ENCODE measurements at regions of chr19 and their contacts with region 1.

Region 1: GRCh38 chr19:42244347-42245220 is 2.2 kb upstream of the GSK3A start:
- DNase-seq: peak; percentile 96
- ATAC-seq: peak; percentile 40
- H3K4me3 ChIP-seq: peak overlapping the region; percentile 67 to 97 (median 87)
- H3K4me3 Mint-ChIP-seq: peak overlapping the region; percentile 100
- H3K27ac ChIP-seq: peak overlapping the region; percentile 64 to 71
- H3K27ac Mint-ChIP-seq: peak overlapping the region; percentile 99
- H3K4me1 ChIP-seq: peaks cover 30 to 40% of the 10 kb centered on the region in 2 donors
- H3K4me1 Mint-ChIP-seq: peaks cover 53% of the 10 kb centered on the region
- H3K27me3 ChIP-seq: no peaks in the 10 kb centered on the region
- H3K27me3 Mint-ChIP-seq: no peaks in the 10 kb centered on the region
- CTCF ChIP-seq: peak; percentile 70

Region 2: DNA sequence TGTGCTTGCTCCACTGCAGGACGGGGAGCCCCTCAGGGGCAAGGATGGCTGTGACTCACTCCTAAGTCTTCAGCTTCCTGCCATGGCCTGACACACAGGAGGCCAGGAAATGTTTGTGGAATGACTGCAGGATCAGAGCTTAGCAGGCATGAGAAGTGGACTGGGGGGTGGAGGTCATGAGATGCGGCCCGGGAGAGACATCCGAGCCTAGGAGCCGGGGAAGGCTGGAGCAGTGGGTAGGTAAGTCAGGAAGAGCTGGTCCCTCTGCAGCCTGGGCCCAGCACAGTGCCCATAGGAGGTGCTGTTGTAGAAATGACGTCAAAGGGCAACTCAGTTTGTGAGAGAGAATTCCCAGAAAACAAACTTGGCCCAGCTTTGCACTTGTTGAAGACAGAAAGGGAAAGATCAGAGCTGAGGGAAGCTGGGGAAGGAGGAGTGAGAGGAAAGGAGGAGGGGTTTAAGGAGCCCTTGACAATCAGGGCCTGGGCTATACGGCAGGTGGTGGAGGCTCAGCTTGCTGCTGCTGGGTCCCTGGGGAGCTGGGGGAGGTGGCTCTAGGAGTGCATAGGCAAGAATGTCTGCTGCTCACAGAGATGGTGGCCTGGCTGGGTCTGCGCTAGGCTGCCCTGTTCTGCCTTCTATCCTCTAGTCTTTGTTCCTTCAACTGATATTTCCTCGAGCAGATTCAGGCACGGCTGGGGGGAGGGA is 130.8 kb before region 1 on chr19:
- CTCF ChIA-PET with region 1: interaction called, 8 read pairs
- POLR2A ChIA-PET with region 1: interaction called, 10 read pairs
- intact Hi-C with region 1: loop called (anchors 1 kb)
- DNase-seq: peak; percentile 84
- ATAC-seq: peak; percentile 80
- H3K4me3 ChIP-seq: peak overlapping the region in 4 of 5 experiments; percentile 16 to 49 (median 38)
- H3K4me3 Mint-ChIP-seq: peak overlapping the region; percentile 87
- H3K27ac ChIP-seq: peak overlapping the region; percentile 71 to 79
- H3K27ac Mint-ChIP-seq: peak overlapping the region; percentile 98
- H3K4me1 ChIP-seq: peaks cover 81 to 98% of the 10 kb centered on the region in 2 donors
- H3K4me1 Mint-ChIP-seq: peaks cover 91% of the 10 kb centered on the region
- H3K27me3 ChIP-seq: no peaks in the 10 kb centered on the region
- H3K27me3 Mint-ChIP-seq: no peaks in the 10 kb centered on the region
- CTCF ChIP-seq: no peak

Region 3: DNA sequence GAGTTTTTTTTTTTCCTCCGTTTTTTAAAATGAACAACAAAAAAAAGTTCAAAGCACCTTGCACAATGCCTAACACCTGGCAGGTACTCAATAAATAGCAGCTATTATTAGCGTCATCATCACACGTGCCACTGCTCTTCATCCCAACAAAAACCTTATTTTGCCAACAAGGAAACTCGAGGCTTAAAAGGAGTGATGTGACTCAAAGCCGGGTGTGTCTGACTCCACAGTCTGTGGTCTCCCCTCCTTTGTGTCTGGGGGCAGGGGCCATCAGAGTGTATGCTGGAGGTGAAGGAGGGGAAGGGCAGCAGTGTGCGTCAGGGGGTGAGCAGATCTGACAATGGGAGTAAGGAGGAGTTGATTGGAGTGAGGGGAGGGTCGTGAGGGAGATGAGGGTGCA is 78.3 kb before region 1 on chr19:
- CTCF ChIA-PET with region 1: no interaction called
- POLR2A ChIA-PET with region 1: no interaction called
- intact Hi-C with region 1: no loop called
- DNase-seq: no peak
- ATAC-seq: no peak
- H3K4me3 ChIP-seq: no peak overlapping the region
- H3K4me3 Mint-ChIP-seq: no peak overlapping the region
- H3K27ac ChIP-seq: no peak overlapping the region
- H3K27ac Mint-ChIP-seq: no peak overlapping the region
- H3K4me1 ChIP-seq: no peaks in the 10 kb centered on the region
- H3K4me1 Mint-ChIP-seq: peaks cover 2% of the 10 kb centered on the region
- H3K27me3 ChIP-seq: peaks cover 0 to 8% (median 0%) of the 10 kb centered on the region in 4 experiments
- H3K27me3 Mint-ChIP-seq: peaks cover 3% of the 10 kb centered on the region
- CTCF ChIP-seq: no peak

Region 4: DNA sequence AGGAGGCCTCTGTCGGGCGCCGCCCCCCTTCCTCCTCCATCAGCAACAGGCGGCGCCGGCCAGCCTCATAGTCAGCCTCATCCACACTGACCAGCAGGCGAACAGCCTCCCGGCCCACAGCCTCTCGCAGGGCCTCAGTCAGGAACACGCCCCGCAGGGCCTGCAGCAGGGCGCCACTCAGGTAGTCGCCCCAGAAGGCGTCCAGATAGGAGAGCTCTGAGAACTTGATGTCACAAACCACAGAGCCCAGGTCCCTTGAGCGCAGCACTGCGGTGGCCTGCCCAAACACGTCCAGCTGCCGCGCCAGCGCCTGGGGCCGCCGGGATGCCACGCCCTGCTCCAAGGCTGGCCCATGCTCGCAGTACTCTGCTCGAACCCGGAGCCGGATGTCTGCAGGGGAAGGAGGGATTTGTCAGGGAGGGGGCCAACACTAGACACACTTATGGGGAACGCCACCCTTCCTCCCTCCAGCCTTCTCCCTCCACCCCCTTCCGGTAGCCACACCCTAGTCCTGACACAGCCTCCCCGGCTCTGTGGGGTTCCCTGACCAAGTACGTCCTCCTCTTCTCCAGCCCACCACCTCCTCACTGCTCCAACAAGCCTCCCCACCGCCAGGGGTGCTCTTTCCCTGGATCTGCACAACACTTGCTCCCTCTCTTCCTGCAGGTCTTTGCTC is 45.0 kb before region 1 on chr19:
- CTCF ChIA-PET with region 1: interaction called, 4 read pairs
- POLR2A ChIA-PET with region 1: interaction called, 5 read pairs
- intact Hi-C with region 1: loop called (anchors 1 kb)
- DNase-seq: peak; percentile 70
- ATAC-seq: peak; percentile 37
- H3K4me3 ChIP-seq: peak overlapping the region; percentile 27 to 54 (median 44)
- H3K4me3 Mint-ChIP-seq: peak overlapping the region; percentile 77
- H3K27ac ChIP-seq: peak overlapping the region; percentile 91 to 94
- H3K27ac Mint-ChIP-seq: peak overlapping the region; percentile 92
- H3K4me1 ChIP-seq: peaks cover 70 to 84% of the 10 kb centered on the region in 2 donors
- H3K4me1 Mint-ChIP-seq: peaks cover 82% of the 10 kb centered on the region
- H3K27me3 ChIP-seq: no peaks in the 10 kb centered on the region
- H3K27me3 Mint-ChIP-seq: no peaks in the 10 kb centered on the region
- CTCF ChIP-seq: peak; percentile 32

Region 5: DNA sequence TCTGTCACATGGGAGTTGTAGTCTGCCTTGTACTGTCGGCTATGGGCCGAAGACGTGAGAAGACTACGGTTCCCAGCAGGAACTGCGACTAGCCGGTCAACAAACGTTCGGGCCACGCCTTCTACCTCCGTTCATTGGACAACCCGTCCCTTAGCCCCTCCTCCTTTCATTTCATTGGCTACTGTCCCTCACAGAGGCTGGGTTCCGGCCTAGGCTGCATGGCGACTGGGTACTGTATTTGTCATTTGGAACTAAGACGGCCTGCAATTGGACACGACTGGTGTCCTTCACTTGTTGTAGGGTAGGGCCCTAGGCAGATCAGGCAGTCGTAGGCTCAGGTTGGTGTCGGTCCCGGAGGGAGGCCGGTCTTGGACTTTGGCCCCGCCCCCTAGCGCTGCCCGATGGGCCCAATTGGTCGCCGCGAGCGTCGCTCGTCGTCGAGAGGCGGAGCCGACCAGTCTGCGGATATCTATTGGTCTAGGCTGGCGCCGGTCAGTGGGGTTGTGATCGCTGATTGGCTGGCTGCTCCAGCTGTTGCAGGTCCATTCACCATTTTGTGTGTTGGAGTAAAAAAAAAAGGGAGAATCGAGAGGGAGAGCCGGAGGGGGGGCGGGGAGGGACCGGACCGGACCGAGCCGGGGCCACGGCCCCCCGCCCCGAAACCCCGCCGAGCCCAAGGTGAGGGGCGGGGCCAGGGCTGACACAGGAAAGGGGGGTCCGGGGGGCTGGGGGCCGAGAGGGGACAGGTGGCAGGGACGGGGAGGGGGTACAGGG is 24.3 kb after region 1 on chr19 and contains the start of gene CIC:
- CTCF ChIA-PET with region 1: interaction called, 5 read pairs
- POLR2A ChIA-PET with region 1: interaction called, 9 read pairs
- intact Hi-C with region 1: loop called (anchors 1 kb)
- DNase-seq: peak; percentile 100
- ATAC-seq: peak; percentile 76
- H3K4me3 ChIP-seq: peak within 1 kb of the TSS; percentile 74 to 95 (median 90)
- H3K4me3 Mint-ChIP-seq: peak within 1 kb of the TSS; percentile 88
- H3K27ac ChIP-seq: peak within 1 kb of the TSS; percentile 98 to 100
- H3K27ac Mint-ChIP-seq: peak within 1 kb of the TSS; percentile 96
- H3K4me1 ChIP-seq: peaks cover 26 to 32% of the 10 kb centered on the region in 2 donors
- H3K4me1 Mint-ChIP-seq: peaks cover 24% of the 10 kb centered on the region
- H3K27me3 ChIP-seq: no peaks in the 10 kb centered on the region
- H3K27me3 Mint-ChIP-seq: no peaks in the 10 kb centered on the region
- CTCF ChIP-seq: no peak
- total RNA-seq, gene CIC: 119 and 123 TPM in 2 replicates

Region 6: GRCh38 chr19:42301656-42302203 is 57.1 kb after region 1 on chr19 and contains the start of gene PRR19:
- CTCF ChIA-PET with region 1: interaction called, 8 read pairs
- POLR2A ChIA-PET with region 1: interaction called, 5 read pairs
- intact Hi-C with region 1: loop called (anchors 1 kb)
- DNase-seq: no peak
- ATAC-seq: peak; percentile 3
- H3K4me3 ChIP-seq: peak within 1 kb of the TSS; percentile 42 to 80 (median 66)
- H3K4me3 Mint-ChIP-seq: peak within 1 kb of the TSS; percentile 91
- H3K27ac ChIP-seq: peak within 1 kb of the TSS in 1 of 2 donors; percentile 3
- H3K27ac Mint-ChIP-seq: peak within 1 kb of the TSS; percentile 78
- H3K4me1 ChIP-seq: peaks cover 17 to 22% of the 10 kb centered on the region in 2 donors
- H3K4me1 Mint-ChIP-seq: peaks cover 25% of the 10 kb centered on the region
- H3K27me3 ChIP-seq: no peaks in the 10 kb centered on the region
- H3K27me3 Mint-ChIP-seq: no peaks in the 10 kb centered on the region
- CTCF ChIP-seq: no peak
- total RNA-seq, gene PRR19: 0.41 and 0.54 TPM in 2 replicates